Endothelial cell of umbilical vein (primary cell): ENCODE measurements at regions of chr9 and their contacts with region 1.

Region 1: GRCh38 chr9:90914868-90915483 is 113.4 kb downstream of the SYK start:
- DNase-seq: peak; percentile 62
- H3K4me3 ChIP-seq: no peak overlapping the region
- H3K27ac ChIP-seq: no peak overlapping the region
- H3K4me1 ChIP-seq: no peaks in the 10 kb centered on the region
- H3K27me3 ChIP-seq: peaks cover 0 to 1% of the 10 kb centered on the region in 2 experiments
- CTCF ChIP-seq: peak; percentile 80 to 89
- POLR2A ChIP-seq: no peak

Region 2: GRCh38 chr9:90985631-90986030 is 70.7 kb after region 1 on chr9:
- CTCF ChIA-PET with region 1: interaction called, 14 read pairs
- POLR2A ChIA-PET with region 1: no interaction called
- dilution Hi-C with region 1: no loop called
- intact Hi-C with region 1: no loop called
- DNase-seq: peak; percentile 5
- H3K4me3 ChIP-seq: no peak overlapping the region
- H3K27ac ChIP-seq: no peak overlapping the region
- H3K4me1 ChIP-seq: peaks cover 7% of the 10 kb centered on the region
- H3K27me3 ChIP-seq: no peaks in the 10 kb centered on the region
- CTCF ChIP-seq: no peak
- POLR2A ChIP-seq: no peak

Region 3: DNA sequence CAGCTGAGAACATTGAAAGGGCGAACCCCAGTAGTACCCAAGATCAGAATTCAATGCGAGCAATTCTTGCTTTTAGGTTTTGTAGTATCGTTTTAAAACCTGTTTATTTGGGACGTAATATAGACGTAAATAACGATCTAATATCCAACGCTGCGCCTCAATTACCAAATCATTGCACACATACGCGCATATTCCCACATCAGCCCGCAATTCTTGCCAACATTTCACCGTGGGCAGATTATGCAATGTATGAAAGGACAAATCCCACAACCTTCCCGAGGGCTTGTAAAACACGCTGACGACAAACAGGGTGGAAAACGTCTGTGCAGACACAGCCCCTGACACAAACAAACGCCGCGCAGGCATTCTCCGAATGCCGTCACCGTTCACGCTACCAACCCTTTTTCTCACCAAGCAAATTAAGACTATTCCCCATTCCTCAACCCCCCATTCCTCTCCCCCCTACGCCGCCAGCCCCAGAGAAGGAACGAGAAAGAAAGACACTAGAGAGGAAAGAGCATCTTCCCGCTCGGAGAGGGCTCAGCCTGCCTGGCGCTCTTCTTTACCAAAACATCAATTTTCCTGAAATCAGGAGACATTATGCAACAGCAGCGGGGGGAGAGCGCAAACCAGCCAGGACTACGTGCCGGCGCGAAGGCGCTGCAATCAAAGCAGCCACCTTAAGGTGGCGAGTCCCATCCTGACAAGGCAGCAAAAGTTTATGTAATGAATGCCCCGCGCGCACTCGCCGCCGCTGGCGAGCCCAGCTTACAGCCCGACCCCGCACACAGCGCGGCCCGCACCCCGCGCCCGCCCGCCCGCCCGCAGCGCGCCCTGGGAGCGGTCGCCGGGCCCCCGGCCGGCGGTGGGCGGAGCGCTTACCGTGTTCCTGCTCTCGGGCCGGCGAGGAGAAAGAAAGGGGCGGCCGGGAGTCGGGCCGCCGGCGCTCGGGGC is 508.1 kb after region 1 on chr9:
- CTCF ChIA-PET with region 1: interaction called, 139 read pairs
- POLR2A ChIA-PET with region 1: no interaction called
- dilution Hi-C with region 1: no loop called
- intact Hi-C with region 1: loop called (anchors 1 kb)
- DNase-seq: peak; percentile 73
- H3K4me3 ChIP-seq: peak overlapping the region; percentile 57 to 81 (median 60)
- H3K27ac ChIP-seq: peak overlapping the region; percentile 46
- H3K4me1 ChIP-seq: peaks cover 35% of the 10 kb centered on the region
- H3K27me3 ChIP-seq: no peaks in the 10 kb centered on the region
- CTCF ChIP-seq: peak; percentile 4 to 38
- POLR2A ChIP-seq: no peak

Region 4: GRCh38 chr9:91681461-91682305 is 766.7 kb after region 1 on chr9:
- CTCF ChIA-PET with region 1: interaction called, 48 read pairs
- POLR2A ChIA-PET with region 1: no interaction called
- dilution Hi-C with region 1: no loop called
- intact Hi-C with region 1: loop called (anchors 1 kb)
- DNase-seq: peak; percentile 48
- H3K4me3 ChIP-seq: no peak overlapping the region
- H3K27ac ChIP-seq: no peak overlapping the region
- H3K4me1 ChIP-seq: no peaks in the 10 kb centered on the region
- H3K27me3 ChIP-seq: peaks cover 0 to 2% of the 10 kb centered on the region in 2 experiments
- CTCF ChIP-seq: peak; percentile 84 to 96
- POLR2A ChIP-seq: no peak

Region 5: GRCh38 chr9:91758491-91758981 is 843.6 kb after region 1 on chr9:
- CTCF ChIA-PET with region 1: interaction called, 11 read pairs
- POLR2A ChIA-PET with region 1: no interaction called
- dilution Hi-C with region 1: no loop called
- intact Hi-C with region 1: no loop called
- DNase-seq: peak; percentile 10
- H3K4me3 ChIP-seq: no peak overlapping the region
- H3K27ac ChIP-seq: no peak overlapping the region
- H3K4me1 ChIP-seq: no peaks in the 10 kb centered on the region
- H3K27me3 ChIP-seq: no peaks in the 10 kb centered on the region
- CTCF ChIP-seq: peak; percentile 61
- POLR2A ChIP-seq: no peak